ENCODE measurements at regions of chr3 and their contacts with region 1.

Region 1: GRCh38 chr3:97882975-97883598 is 61.3 kb downstream of the CRYBG3 start:
- DNase-seq: no peak
- H3K4me3 Mint-ChIP-seq: no peak overlapping the region
- H3K27ac Mint-ChIP-seq: no peak overlapping the region
- H3K4me1 Mint-ChIP-seq: peaks cover 14% of the 10 kb centered on the region
- H3K27me3 Mint-ChIP-seq: no peaks in the 10 kb centered on the region

Region 2: GRCh38 chr3:97778152-97778551 is 104.9 kb before region 1 on chr3:
- CTCF ChIA-PET with region 1: no interaction called
- POLR2A ChIA-PET with region 1: no interaction called
- intact Hi-C with region 1: no loop called
- DNase-seq: no peak
- H3K4me3 Mint-ChIP-seq: no peak overlapping the region
- H3K27ac Mint-ChIP-seq: no peak overlapping the region
- H3K4me1 Mint-ChIP-seq: no peaks in the 10 kb centered on the region
- H3K27me3 Mint-ChIP-seq: no peaks in the 10 kb centered on the region

Region 3: DNA sequence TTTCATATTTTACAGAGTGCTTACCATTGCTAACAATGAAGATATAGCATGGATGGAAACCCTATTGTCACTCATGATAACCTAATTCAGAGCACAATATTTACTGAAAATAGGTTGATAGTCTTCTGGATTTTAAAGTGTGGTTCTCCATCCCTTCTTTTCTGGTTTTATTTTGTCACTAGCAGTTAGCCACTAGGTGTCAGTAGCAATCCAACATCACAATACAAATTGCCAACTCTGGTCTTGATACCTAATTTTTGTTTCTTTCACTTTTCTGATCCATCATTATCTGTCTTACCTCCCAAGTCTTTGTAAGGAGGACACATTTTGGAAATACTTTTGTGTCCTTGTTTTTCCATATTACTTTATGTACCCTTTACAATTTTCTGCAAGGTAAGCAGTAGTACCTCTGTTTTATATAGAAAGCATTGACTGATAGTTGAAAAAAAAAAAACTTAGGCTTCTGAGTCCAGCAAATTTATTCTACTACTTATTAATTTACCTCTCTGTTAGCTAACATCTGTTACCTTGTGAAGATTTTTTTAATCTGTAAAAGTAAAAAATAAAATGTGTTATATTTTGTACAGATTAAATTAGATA is 89.6 kb before region 1 on chr3:
- CTCF ChIA-PET with region 1: interaction called, 10 read pairs
- POLR2A ChIA-PET with region 1: no interaction called
- intact Hi-C with region 1: no loop called
- DNase-seq: no peak
- H3K4me3 Mint-ChIP-seq: no peak overlapping the region
- H3K27ac Mint-ChIP-seq: no peak overlapping the region
- H3K4me1 Mint-ChIP-seq: no peaks in the 10 kb centered on the region
- H3K27me3 Mint-ChIP-seq: no peaks in the 10 kb centered on the region

Region 4: GRCh38 chr3:97804471-97804870 is 78.6 kb before region 1 on chr3:
- CTCF ChIA-PET with region 1: no interaction called
- POLR2A ChIA-PET with region 1: no interaction called
- intact Hi-C with region 1: no loop called
- DNase-seq: no peak
- H3K4me3 Mint-ChIP-seq: no peak overlapping the region
- H3K27ac Mint-ChIP-seq: no peak overlapping the region
- H3K4me1 Mint-ChIP-seq: no peaks in the 10 kb centered on the region
- H3K27me3 Mint-ChIP-seq: no peaks in the 10 kb centered on the region

Measured in activated CD4-positive, alpha-beta memory T cell treated with anti-CD3 and anti-CD28 coated beads for 36 hours (primary cell).